Gastrocnemius medialis (tissue), 4 donors: ENCODE measurements at regions of chr12 and their contacts with region 1.

Region 1: GRCh38 chr12:93894391-93895088 is 217.4 kb downstream of the CRADD start:
- DNase-seq: peak; percentile 91 to 96
- ATAC-seq: peak; percentile 89 to 95
- H3K4me3 ChIP-seq: peak overlapping the region; percentile 19 to 30 (median 26)
- H3K27ac ChIP-seq: peak overlapping the region; percentile 87 to 89 (median 88)
- H3K4me1 ChIP-seq: peaks cover 28% of the 10 kb centered on the region in 2 donors
- H3K27me3 ChIP-seq: no peaks in the 10 kb centered on the region
- CTCF ChIP-seq: no peak
- POLR2A ChIP-seq: peak in 1 of 2 donors; percentile 44

Region 2: DNA sequence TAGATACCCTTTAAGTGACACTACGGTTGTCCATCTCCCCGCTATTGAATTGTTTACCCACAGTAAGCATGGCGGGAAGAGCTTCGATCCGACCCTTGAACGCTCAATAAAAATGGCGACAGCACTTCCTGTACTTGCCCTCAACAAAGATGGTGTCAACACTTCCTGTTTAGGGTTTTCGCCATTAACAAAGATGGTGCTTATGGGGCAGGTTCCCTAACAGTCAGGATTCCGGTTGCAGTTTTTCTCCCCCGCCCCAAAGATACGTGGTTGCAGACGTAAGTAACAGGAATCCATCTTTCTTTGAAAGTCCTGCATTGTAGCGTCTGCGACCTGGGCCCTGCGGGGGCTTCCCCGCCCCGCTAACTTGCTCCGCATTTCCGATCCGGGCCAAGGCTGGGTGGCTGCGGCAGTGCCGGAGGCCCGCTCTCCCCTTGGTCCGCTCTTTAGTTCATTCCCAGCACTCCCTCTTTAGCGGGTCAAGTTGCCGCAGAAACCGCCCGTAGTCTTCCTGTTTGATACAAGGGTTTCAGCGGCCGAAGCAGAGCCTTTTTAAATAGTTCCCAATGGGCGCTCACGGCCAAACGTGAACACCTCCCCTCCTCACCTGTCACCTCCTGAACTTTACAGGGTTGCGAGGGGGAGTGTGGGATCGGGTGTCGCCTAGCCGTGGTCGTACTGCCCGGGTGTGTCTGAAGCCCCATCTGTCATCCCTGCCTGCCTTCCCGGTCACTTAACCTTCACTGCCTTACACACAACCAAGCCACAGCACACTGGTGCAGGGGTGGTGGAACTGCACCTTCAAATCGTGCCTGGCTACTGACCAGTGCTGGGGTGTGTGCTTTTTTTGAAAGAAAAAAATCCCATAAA is 217.1 kb before region 1 on chr12 and contains the start of gene CRADD:
- in situ Hi-C with region 1: no loop called
- intact Hi-C with region 1: loop called (anchors 5 kb)
- DNase-seq: peak; percentile 78 to 84
- ATAC-seq: peak; percentile 92 to 96
- H3K4me3 ChIP-seq: peak within 1 kb of the TSS; percentile 71 to 87 (median 84)
- H3K27ac ChIP-seq: peak within 1 kb of the TSS; percentile 95 to 96 (median 96)
- H3K4me1 ChIP-seq: peaks cover 44 to 47% of the 10 kb centered on the region in 2 donors
- H3K27me3 ChIP-seq: no peaks in the 10 kb centered on the region
- CTCF ChIP-seq: no peak
- POLR2A ChIP-seq: peak; percentile 53 to 70
- total RNA-seq, gene CRADD: 19.4 to 28.7 (median 22.6) TPM

Region 3: GRCh38 chr12:93778306-93778705 is 116.2 kb before region 1 on chr12:
- in situ Hi-C with region 1: no loop called
- intact Hi-C with region 1: loop called (anchors 5 kb)
- DNase-seq: peak; percentile 73 to 76
- ATAC-seq: peak; percentile 95 to 97
- H3K4me3 ChIP-seq: no peak overlapping the region
- H3K27ac ChIP-seq: peak overlapping the region; percentile 76 to 87 (median 85)
- H3K4me1 ChIP-seq: peaks cover 41 to 42% of the 10 kb centered on the region in 2 donors
- H3K27me3 ChIP-seq: no peaks in the 10 kb centered on the region
- CTCF ChIP-seq: no peak
- POLR2A ChIP-seq: peak in 1 of 2 donors; percentile 45

Region 4: DNA sequence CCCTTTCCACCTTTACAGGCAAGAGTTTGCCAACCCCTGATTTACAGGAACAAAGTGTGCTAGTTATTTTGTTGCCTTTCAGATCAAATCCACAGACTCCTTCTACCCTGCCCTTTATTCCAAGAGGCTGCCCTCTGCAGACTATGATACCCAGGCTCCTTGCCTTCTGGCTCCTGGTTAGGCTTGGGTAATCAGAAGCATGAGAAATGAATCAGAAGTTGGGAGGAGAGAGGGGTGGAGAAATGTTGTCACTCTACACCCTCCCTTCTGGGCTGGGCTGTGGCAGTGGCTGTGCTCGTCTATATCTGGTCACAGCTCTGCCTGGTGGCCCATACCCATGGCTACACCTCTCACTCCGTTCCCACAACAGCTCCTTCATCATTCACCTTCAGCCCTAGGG is 49.2 kb after region 1 on chr12:
- in situ Hi-C with region 1: no loop called
- intact Hi-C with region 1: loop called (anchors 1 kb)
- DNase-seq: peak; percentile 75 to 87
- ATAC-seq: peak; percentile 99 to 100
- H3K4me3 ChIP-seq: no peak overlapping the region
- H3K27ac ChIP-seq: peak overlapping the region; percentile 63 to 81 (median 72)
- H3K4me1 ChIP-seq: peaks cover 6 to 9% of the 10 kb centered on the region in 2 donors
- H3K27me3 ChIP-seq: no peaks in the 10 kb centered on the region
- CTCF ChIP-seq: peak; percentile 34 to 49 (median 42)
- POLR2A ChIP-seq: peak in 1 of 2 donors; percentile 41

Region 5: GRCh38 chr12:94012590-94012989 is 118.0 kb after region 1 on chr12:
- in situ Hi-C with region 1: no loop called
- intact Hi-C with region 1: no loop called
- DNase-seq: no peak
- ATAC-seq: no peak
- H3K4me3 ChIP-seq: no peak overlapping the region
- H3K27ac ChIP-seq: no peak overlapping the region
- H3K4me1 ChIP-seq: peaks cover 0 to 5% of the 10 kb centered on the region in 2 donors
- H3K27me3 ChIP-seq: no peaks in the 10 kb centered on the region
- CTCF ChIP-seq: no peak
- POLR2A ChIP-seq: no peak